ENCODE measurements at regions of chr18 and their contacts with region 1.

Region 1: GRCh38 chr18:32261003-32261402 is 71.2 kb downstream of the MEP1B start:
- DNase-seq: no peak
- H3K4me3 Mint-ChIP-seq: no peak overlapping the region
- H3K27ac Mint-ChIP-seq: no peak overlapping the region
- H3K4me1 Mint-ChIP-seq: no peaks in the 10 kb centered on the region
- H3K27me3 Mint-ChIP-seq: peaks cover 28% of the 10 kb centered on the region

Region 2: DNA sequence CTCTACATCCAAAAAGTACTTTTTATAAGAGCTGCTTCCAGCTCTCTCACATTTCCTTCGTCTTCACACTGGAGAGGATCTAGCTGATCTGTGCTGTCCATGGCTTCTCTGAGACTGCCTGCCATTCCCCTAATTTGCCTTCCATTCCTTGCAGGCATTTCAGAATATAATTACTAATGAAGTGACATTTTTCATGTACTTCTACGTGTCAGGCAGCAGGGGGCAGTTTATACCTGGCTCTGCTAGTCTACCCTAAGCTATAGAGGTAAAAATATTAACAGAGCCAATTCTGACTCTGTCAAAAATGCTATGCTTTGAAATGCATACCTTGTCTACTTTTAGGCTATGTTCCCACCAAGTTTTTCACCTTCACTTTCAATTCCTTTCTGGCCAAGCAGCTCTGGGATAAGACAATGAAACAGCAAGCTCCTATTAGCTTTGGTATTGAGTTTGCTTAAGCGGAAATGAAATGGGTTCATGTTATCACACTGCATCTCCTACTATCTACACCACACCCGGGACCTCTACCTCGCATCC is 10.7 kb after region 1 on chr18:
- CTCF ChIA-PET with region 1: interaction called, 17 read pairs
- POLR2A ChIA-PET with region 1: no interaction called
- DNase-seq: no peak
- H3K4me3 Mint-ChIP-seq: no peak overlapping the region
- H3K27ac Mint-ChIP-seq: no peak overlapping the region
- H3K4me1 Mint-ChIP-seq: no peaks in the 10 kb centered on the region
- H3K27me3 Mint-ChIP-seq: peaks cover 7% of the 10 kb centered on the region

Measured in activated CD4-positive, alpha-beta memory T cell treated with anti-CD3 and anti-CD28 coated beads, Interleukin-2, amount 10 ng/mL, durations not matched to agents 7 days and 5 days (primary cell).